Activated B cell treated with CpG ODN at 0.5 μM for 24 hours (primary cell): ENCODE measurements at regions of chr1 and their contacts with region 1.

Region 1: DNA sequence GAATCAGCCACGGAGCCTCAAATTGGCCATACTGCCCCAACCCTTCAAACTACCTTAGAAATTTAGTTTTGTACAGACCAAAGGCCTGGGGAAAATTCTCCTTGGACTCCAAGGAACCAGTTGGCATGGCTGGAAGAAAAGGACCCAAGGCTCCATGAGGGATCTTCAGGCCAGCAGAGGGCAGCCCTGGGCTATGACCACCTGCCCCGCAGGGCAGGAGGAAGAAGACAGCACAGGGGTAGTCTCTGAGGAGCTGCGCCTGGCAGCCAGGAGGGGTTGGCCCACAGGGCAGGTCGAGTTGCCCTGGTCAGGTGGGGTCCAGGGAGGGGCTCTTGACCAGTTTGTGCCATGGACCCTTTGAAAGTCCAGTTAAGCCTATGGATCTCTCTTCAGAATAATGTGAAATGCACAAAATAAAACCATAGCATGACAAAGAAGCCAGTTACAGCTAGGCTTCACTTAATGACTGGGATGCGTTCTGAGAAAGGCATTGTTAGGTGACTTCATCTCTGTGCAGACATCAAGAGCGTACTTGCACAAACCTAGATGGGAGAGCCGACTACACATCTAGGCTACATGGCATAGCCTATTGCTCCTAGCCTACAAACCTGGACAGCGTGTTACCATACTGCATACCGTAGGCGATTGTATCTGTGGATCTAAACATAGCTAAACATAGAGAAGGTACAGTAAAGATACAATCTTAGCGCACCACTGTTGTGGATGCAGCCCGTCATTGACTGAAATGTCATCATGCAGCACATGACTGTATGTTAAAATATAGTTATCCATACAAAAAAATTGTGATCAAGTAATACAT is 26.1 kb downstream of the CACNA1S start:
- DNase-seq: no peak
- ATAC-seq: peak; percentile 40
- H3K4me3 Mint-ChIP-seq: no peak overlapping the region
- H3K27ac Mint-ChIP-seq: no peak overlapping the region
- H3K4me1 Mint-ChIP-seq: no peaks in the 10 kb centered on the region
- H3K27me3 Mint-ChIP-seq: peaks cover 11% of the 10 kb centered on the region
- CTCF ChIP-seq: no peak

Region 2: DNA sequence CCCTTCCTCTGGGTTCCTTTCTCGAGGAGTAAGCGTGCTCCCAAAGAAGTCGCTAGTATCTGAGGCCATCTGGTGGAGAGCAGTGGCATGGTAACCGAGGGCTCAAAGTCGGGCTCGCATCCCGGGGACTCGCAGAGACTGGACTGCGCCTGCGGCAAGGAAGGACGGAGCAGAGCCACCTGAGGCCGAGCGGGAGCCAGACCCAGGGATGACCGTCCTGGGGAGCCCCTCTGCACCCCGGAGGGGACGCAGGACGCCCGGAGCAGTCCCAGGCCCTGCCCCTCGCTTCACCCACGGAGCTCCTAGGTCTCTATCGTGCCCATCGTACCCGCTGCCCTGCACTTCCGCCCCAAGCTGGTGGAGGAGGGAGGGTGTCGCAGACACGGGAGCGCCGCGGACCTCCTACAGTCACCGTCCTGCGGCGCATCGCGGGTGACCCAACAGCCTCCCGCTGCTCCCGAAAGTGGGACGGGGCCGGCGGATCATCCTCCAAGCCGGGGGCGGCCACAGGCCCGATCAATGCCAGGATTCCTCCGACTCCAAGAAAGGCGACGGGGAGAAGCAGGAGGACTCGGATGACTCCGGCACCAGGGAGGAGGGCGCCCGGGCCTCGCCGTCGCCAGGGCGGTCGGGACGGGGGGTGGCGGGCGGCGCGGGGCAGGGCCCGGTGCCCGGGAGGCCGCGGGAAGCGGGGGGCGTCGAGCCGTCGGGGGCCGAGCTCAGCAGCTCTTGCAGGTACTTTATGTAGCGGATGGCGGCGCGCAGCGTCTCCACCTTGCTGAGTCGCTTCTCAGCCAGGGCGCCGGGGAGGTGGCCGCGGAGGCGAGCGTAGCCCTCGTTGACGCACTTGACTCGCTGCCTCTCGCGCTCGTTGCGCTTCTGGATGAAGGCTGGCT is 28.4 kb after region 1 on chr1:
- CTCF ChIA-PET with region 1: interaction called, 3 read pairs
- POLR2A ChIA-PET with region 1: no interaction called
- intact Hi-C with region 1: loop called (anchors 1 kb)
- DNase-seq: peak; percentile 61
- ATAC-seq: peak; percentile 88
- H3K4me3 Mint-ChIP-seq: peak overlapping the region; percentile 82
- H3K27ac Mint-ChIP-seq: no peak overlapping the region
- H3K4me1 Mint-ChIP-seq: peaks cover 2% of the 10 kb centered on the region
- H3K27me3 Mint-ChIP-seq: peaks cover 12% of the 10 kb centered on the region
- CTCF ChIP-seq: peak; percentile 18

Region 3: DNA sequence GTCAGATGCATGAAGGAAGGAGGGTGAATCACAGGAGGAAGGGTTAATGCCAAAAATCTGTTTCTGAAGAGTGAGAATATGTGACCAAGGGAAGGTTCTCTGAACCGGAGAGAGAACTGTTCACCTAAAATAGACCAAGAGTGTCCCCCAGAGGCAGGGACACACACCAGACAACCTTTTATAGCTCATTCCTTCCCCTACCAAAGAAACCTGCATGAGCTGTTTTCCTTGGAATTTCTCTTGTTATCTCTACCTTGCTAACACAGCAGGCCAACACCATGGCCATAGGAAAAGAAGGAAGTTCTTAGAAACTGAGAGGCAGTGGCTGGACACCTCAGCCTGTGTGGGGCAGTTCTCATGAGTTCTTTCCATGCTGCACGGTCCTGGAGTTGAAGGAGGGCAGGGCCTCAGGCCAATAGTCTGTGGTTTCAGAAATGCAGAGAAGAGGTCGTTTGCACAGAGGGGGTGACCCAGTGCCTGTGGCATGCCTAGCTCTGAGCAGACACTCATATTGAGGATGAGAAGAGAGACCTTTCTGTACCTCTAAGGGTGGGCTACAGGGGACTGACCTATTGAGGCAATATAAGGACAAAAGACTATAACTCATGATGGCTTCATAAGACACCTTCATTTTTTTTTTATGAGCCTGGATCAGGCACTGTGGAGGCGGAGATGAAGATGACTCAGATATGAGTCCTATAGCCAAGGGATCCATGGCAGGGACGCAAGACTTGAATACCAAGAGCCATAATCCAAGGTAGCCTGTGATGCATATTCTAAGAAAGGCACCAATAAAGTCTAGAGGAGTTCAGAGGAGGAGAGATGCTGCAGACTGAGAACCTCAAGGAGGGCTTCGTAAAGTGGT is 143.9 kb after region 1 on chr1:
- CTCF ChIA-PET with region 1: no interaction called
- POLR2A ChIA-PET with region 1: no interaction called
- intact Hi-C with region 1: loop called (anchors 10 kb)
- DNase-seq: no peak
- ATAC-seq: no peak
- H3K4me3 Mint-ChIP-seq: no peak overlapping the region
- H3K27ac Mint-ChIP-seq: no peak overlapping the region
- H3K4me1 Mint-ChIP-seq: no peaks in the 10 kb centered on the region
- H3K27me3 Mint-ChIP-seq: peaks cover 7% of the 10 kb centered on the region
- CTCF ChIP-seq: no peak